ENCODE measurements at regions of chr5 and their contacts with region 1.

Region 1: DNA sequence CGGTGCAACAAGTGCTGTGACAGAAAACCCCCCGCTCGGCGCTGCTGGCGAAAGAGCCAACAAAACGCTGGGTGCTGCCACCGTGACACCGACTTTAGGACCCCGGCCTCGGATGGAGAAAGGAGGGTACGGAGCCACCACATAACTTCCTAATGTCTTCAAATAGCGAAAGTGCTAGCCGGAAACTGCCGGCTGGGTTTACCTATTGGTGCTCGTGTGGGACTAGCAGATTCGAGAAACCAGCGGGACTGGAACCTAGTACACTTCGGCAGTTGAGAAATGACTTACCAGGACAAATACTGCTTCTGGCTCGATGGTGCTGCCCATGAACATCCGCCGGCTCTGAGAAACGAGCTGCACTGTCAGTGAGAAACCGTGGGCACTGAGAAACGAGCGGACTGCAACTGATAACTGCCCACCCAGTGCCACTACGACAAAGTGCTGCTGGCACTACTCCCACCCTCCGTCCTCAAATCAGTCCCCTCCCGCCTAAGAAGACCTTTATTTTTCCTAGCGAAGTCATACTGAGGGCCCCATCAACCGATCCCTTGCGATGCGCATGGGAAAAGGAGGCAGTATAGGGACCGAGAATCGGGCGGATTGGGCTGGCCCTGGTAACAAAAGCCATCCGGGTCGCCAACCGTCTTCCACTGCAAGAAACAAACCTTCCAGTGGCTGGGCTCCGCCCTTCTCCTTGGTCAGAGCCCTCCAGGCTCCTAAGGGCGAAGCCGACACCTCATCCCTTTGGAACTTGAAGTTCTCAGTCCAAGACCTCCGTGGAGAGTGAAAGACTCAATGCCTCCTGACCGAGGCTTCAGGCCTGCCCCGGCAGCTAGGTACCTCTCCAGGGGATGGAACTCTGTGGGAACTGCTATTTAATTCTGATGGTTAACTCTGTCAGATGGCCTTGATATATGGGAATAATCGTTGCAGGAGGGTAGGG is 27.0 kb upstream of the ANXA2R start:
- DNase-seq: peak; percentile 78
- H3K4me3 Mint-ChIP-seq: peak overlapping the region; percentile 99
- H3K27ac Mint-ChIP-seq: peak overlapping the region; percentile 100
- H3K4me1 Mint-ChIP-seq: peaks cover 47% of the 10 kb centered on the region
- H3K27me3 Mint-ChIP-seq: peaks cover 3% of the 10 kb centered on the region

Region 2: DNA sequence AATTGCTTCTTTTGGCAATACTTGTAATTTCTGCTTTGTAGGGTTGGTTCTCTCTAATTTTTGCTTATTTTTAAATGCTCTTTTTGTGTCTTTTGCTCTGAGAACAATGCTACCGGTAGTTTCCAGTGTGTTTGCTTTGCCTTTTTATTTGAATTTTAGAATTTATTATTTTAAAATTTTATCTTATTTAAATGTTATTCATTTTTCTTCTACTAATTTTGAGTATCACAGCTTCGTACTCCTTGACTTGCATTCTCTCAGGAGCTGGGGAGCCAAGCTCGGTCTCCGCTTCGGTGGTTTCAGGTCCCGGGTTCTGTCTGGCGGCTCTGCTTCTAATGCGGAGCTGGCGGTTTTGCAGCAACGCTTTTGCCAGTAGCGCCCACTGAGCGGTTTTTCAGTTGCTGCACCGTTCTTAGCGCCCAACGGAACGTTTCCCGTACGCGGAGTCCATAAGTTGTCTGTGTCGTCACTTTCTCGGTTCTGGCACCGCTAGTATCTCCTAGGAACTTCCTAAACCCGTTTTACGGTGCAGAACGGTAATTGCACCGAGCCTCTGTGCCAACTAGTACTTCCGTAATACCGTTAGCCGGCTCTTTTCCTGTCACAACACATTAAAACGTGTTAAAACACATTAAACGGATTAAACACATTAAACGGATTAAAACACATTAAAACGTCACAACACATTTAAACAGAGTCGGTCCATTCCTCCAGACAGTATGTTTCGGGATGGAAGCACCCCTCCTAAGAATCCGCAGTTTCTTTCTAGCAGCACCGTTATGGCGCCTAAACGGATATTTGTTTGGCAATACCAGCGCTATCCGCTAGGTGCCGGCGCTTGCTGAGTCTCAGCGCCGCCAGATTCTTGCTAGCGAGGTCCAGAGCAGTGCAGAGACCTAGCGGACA is 72.6 kb before region 1 on chr5:
- intact Hi-C with region 1: loop called (anchors 1 kb)
- DNase-seq: peak; percentile 84
- H3K4me3 Mint-ChIP-seq: peak overlapping the region; percentile 98
- H3K27ac Mint-ChIP-seq: peak overlapping the region; percentile 100
- H3K4me1 Mint-ChIP-seq: peaks cover 60% of the 10 kb centered on the region
- H3K27me3 Mint-ChIP-seq: peaks cover 3% of the 10 kb centered on the region

Region 3: GRCh38 chr5:43040287-43041098 is 26.6 kb before region 1 on chr5 and contains the start of gene ANXA2R:
- intact Hi-C with region 1: loop called (anchors 1 kb)
- DNase-seq: peak; percentile 93
- H3K4me3 Mint-ChIP-seq: peak within 1 kb of the TSS; percentile 82
- H3K27ac Mint-ChIP-seq: peak within 1 kb of the TSS; percentile 86
- H3K4me1 Mint-ChIP-seq: peaks cover 59% of the 10 kb centered on the region
- H3K27me3 Mint-ChIP-seq: no peaks in the 10 kb centered on the region
- total RNA-seq, gene ANXA2R: 0.88 and 0.93 TPM in 2 replicates

Region 4: DNA sequence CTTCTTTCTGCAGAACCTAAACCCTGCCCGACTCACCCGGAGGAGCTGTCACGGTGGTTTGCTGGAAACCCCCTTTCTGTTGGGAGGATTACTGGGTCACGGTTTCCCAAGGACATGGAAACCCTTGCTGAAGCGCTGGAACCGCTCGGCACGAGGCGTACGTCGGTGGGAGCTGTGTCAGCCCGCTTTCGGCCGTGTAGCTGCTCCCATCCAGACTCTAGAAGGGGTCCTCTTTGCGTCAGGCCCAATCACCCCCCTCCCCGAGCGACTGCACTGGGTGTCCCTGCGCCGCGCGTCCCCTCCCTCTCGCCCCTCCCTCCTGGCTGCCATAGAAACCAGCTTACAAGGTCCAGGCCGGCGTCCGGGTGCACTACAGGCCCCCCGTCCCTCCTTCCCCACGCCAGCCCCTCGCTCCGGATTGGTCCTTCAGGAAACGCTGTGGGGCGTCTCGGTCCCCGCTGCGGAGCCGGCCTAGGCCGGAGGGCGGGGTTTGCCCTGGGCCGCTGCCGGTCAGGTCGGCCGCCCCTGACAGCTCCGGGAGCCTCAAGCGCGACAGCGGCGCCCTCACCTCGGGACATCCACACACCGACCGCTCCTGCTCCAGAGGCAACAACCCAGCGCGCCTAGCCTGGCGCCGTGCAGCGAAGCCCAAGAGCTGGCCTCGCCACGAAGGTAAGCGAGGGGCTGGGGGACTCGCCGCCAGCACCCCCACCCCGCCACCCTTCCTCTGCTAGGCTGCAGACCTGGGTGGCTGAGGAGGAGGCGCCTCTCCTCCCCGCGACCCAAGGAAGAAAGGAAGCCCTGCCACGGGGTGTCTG is 124.9 kb after region 1 on chr5 and contains the start of gene NIM1K:
- intact Hi-C with region 1: loop called (anchors 2 kb)
- DNase-seq: peak; percentile 39
- H3K4me3 Mint-ChIP-seq: peak within 1 kb of the TSS; percentile 85
- H3K27ac Mint-ChIP-seq: peak within 1 kb of the TSS; percentile 89
- H3K4me1 Mint-ChIP-seq: peaks cover 40% of the 10 kb centered on the region
- H3K27me3 Mint-ChIP-seq: peaks cover 22% of the 10 kb centered on the region
- total RNA-seq, gene NIM1K: 0.39 and 0.67 TPM in 2 replicates

Region 5: GRCh38 chr5:43514816-43515677 is 448.0 kb after region 1 on chr5 and contains the start of gene C5orf34:
- intact Hi-C with region 1: loop called (anchors 1 kb)
- DNase-seq: peak; percentile 92
- H3K4me3 Mint-ChIP-seq: peak within 1 kb of the TSS; percentile 94
- H3K27ac Mint-ChIP-seq: peak within 1 kb of the TSS; percentile 97
- H3K4me1 Mint-ChIP-seq: peaks cover 32% of the 10 kb centered on the region
- H3K27me3 Mint-ChIP-seq: peaks cover 2% of the 10 kb centered on the region
- total RNA-seq, gene C5orf34: 5.3 and 5.5 TPM in 2 replicates

Region 6: GRCh38 chr5:44808435-44809214 is 1741.6 kb after region 1 on chr5 and contains the start of gene MRPS30:
- intact Hi-C with region 1: loop called (anchors 10 kb)
- DNase-seq: peak; percentile 91
- H3K4me3 Mint-ChIP-seq: peak within 1 kb of the TSS; percentile 99
- H3K27ac Mint-ChIP-seq: peak within 1 kb of the TSS; percentile 98
- H3K4me1 Mint-ChIP-seq: peaks cover 42% of the 10 kb centered on the region
- H3K27me3 Mint-ChIP-seq: no peaks in the 10 kb centered on the region
- total RNA-seq, gene MRPS30: 62.9 and 63.5 TPM in 2 replicates

Measured in activated T-helper 1 cell treated with anti-CD3 and anti-CD28 coated beads, Interleukin-12 subunit alpha, Interleukin-12 subunit beta, Interleukin-2, Interleukin-4 antibody, amounts not matched to agents 30 ng/mL and 10 ng/mL and 1 ng/mL, durations not matched to agents 14 hours and 24 hours and 36 hours (primary cell).